IMR-90 (cell line): ENCODE measurements at regions of chrX and their contacts with region 1.

Region 1: DNA sequence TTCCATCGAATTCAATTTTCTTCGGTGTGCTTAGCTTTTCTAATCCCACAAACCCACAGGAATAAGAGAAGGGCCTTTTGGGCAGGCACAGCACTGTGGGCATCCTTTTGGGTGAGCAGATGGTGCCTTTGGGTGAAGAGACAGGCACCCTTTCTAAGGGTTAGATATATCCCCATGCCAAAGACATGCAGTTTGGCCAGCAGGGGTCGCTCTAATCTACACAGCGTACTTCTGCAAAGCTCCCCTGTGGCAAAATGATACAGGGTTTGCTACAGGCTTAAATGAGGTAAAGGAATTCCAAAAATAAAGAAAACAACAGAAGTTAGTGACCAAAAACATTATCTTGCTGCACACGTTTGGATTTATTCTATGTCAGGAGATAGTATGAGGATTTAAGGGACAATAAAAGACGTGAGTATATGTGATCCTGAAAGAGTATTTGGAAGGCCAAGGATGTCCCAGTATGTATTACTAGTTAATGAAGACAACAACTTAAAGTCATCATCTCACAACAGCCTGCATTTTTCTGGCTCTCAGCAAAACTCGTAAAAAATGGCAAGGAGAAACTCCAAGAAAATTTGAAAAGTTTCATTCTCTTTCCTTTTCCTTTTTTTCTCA is 49.5 kb downstream of the PHEX start:
- DNase-seq: peak; percentile 63
- ATAC-seq: peak; percentile 76
- H3K4me3 ChIP-seq: no peak overlapping the region
- H3K27ac ChIP-seq: no peak overlapping the region
- H3K4me1 ChIP-seq: no peaks in the 10 kb centered on the region; the same call in none of the 2 replicates
- H3K27me3 ChIP-seq: no peaks in the 10 kb centered on the region
- CTCF ChIP-seq: peak; percentile 67
- POLR2A ChIP-seq: no peak
- RAD21 ChIP-seq: peak; percentile 75

Region 2: DNA sequence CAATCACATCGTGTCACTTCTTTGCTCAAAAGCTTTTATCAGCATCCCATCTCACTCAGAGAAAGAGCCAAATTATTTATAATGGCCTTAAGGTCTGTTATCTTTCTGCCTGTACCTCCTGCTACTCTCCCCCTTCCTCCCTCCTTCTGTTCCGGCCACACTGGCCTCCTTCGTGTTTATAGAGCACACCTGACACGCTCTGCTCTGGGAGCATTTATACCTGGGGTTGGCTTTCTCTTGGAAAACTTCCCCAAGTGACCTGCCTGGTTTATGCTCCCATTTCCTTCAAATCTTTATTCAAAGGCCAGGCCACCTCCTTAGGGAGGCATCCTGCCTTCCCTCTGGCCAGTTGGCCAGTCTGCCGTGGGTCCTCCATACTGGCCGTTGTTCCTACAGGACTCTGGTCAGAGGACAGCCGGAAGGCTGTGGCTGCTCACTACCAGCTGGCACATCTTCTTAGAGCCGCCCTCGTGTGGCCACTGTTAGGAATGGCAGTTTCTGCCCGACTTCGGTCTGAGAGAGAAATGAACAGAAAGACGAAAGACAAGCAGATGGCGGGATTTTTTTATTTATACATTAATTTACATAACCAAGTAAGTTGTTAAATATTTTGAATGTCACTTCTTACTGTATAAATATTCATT is 111.0 kb after region 1 on chrX:
- CTCF ChIA-PET with region 1: no interaction called
- POLR2A ChIA-PET with region 1: no interaction called
- dilution Hi-C with region 1: no loop called
- in situ Hi-C with region 1: no loop called
- intact Hi-C with region 1: loop called (anchors 1 kb)
- DNase-seq: peak; percentile 56
- ATAC-seq: peak; percentile 94
- H3K4me3 ChIP-seq: no peak overlapping the region
- H3K27ac ChIP-seq: no peak overlapping the region
- H3K4me1 ChIP-seq: no peaks in the 10 kb centered on the region
- H3K27me3 ChIP-seq: no peaks in the 10 kb centered on the region; the same call in 1 of the 2 replicates
- CTCF ChIP-seq: peak; percentile 70
- POLR2A ChIP-seq: no peak
- RAD21 ChIP-seq: peak; percentile 68

Region 3: GRCh38 chrX:23554304-23554703 is 1472.7 kb after region 1 on chrX:
- CTCF ChIA-PET with region 1: no interaction called
- POLR2A ChIA-PET with region 1: no interaction called
- dilution Hi-C with region 1: no loop called
- in situ Hi-C with region 1: no loop called
- intact Hi-C with region 1: loop called (anchors 2 kb)
- DNase-seq: peak; percentile 50
- ATAC-seq: 0 out of 2 replicates have a peak, but pooled peaks have one; percentile 40
- H3K4me3 ChIP-seq: no peak overlapping the region
- H3K27ac ChIP-seq: no peak overlapping the region
- H3K4me1 ChIP-seq: no peaks in the 10 kb centered on the region
- H3K27me3 ChIP-seq: no peaks in the 10 kb centered on the region
- CTCF ChIP-seq: peak; percentile 57
- POLR2A ChIP-seq: no peak
- RAD21 ChIP-seq: peak; percentile 53

Region 4: GRCh38 chrX:23616361-23616760 is 1534.8 kb after region 1 on chrX:
- CTCF ChIA-PET with region 1: no interaction called
- POLR2A ChIA-PET with region 1: no interaction called
- dilution Hi-C with region 1: no loop called
- in situ Hi-C with region 1: no loop called
- intact Hi-C with region 1: loop called (anchors 10 kb)
- DNase-seq: peak; percentile 38
- ATAC-seq: peak; percentile 79
- H3K4me3 ChIP-seq: no peak overlapping the region
- H3K27ac ChIP-seq: no peak overlapping the region
- H3K4me1 ChIP-seq: no peaks in the 10 kb centered on the region
- H3K27me3 ChIP-seq: peaks cover 2% of the 10 kb centered on the region
- CTCF ChIP-seq: peak; percentile 55
- POLR2A ChIP-seq: no peak
- RAD21 ChIP-seq: peak; percentile 54